CD8-positive, alpha-beta T cell (primary cell): ENCODE measurements at regions of chr17 and their contacts with region 1.

Region 1: DNA sequence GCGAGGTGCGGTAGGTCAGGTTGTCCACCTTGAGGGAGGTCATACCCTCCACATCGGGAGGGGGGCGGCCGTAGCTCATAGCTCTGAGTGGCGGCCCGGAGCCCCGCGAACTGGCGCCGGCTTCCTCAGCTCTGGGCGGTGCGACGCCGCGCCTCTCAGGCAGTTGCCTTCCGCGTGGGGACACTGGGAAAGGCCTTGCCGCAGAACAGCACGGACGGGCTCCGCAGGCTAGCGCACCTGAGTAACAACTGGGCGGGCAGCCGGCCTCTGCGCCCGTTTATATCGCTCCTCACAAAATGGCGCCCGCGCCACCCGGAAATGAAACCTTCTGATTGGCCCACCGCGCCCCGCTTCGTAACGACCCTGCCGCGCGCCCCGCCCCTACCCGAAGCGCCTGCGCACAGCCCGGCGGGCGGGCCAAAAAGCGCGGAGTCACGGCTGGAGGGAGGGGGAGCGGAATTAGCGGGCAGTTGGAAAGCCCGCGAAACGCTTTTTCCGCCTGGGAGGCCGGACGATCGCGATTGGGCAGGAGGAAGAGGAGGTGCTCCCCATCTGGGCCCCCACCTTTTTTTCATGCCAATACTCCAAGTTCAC is at the start of gene SRSF2:
- DNase-seq: peak; percentile 96 to 99 (median 98)
- ATAC-seq: peak; percentile 79
- H3K4me3 ChIP-seq: peak within 1 kb of the TSS; percentile 88 to 100
- H3K4me3 Mint-ChIP-seq: peak within 1 kb of the TSS; percentile 96
- H3K27ac ChIP-seq: peak within 1 kb of the TSS; percentile 93 to 99
- H3K27ac Mint-ChIP-seq: peak within 1 kb of the TSS; percentile 97
- H3K4me1 ChIP-seq: peaks cover 44% of the 10 kb centered on the region
- H3K4me1 Mint-ChIP-seq: peaks cover 59% of the 10 kb centered on the region
- H3K27me3 ChIP-seq: no peaks in the 10 kb centered on the region
- H3K27me3 Mint-ChIP-seq: no peaks in the 10 kb centered on the region
- CTCF ChIP-seq: no peak
- total RNA-seq, gene SRSF2: 621 to 637 TPM

Region 2: DNA sequence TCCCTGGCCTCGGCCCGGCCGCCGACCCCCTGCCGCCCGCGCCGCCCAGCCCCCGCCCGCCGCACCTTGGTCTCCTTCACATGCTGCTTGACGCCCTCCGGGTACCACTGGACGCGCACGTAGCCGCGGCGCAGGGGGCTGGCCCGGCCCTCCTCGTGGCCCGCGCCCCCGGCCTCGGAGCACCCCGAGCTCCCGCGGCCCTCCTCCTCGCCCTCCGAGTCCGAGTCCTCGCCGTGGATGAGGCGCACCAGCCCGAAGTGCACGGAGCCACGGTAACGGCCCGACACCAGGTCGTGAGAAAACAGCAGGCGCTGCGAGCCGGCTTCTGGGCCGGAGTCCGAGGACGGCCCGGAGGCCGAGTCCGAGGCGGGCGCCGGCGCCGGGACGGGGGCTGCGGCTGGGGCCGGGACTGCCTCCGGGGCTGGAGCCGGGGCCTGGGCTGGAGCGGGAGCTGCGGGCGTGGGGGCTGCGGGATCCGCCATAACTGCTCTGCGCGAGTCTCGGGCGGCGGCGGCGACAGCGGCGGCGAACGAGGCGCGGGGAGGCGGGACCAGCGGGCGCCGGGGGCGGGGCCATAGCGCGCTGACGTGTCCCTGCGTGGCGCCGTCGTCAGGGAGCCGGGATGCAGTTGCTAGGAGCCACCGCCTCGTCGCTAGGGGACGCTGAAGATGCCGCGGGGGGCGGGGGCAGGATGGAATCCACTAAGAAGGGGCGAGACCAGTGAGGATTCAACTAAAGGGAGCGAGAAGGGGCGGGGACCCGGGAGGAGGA is 284.3 kb before region 1 on chr17 and contains the start of gene UBE2O:
- CTCF ChIA-PET with region 1: no interaction called
- POLR2A ChIA-PET with region 1: interaction called, 4 read pairs
- intact Hi-C with region 1: loop called in 1 of 2 experiments (anchors 5 kb)
- DNase-seq: peak; percentile 84 to 96 (median 94)
- ATAC-seq: peak; percentile 92
- H3K4me3 ChIP-seq: peak within 1 kb of the TSS; percentile 49 to 78
- H3K4me3 Mint-ChIP-seq: peak within 1 kb of the TSS; percentile 85
- H3K27ac ChIP-seq: peak within 1 kb of the TSS; percentile 50 to 64
- H3K27ac Mint-ChIP-seq: peak within 1 kb of the TSS; percentile 78
- H3K4me1 ChIP-seq: peaks cover 22% of the 10 kb centered on the region
- H3K4me1 Mint-ChIP-seq: peaks cover 39% of the 10 kb centered on the region
- H3K27me3 ChIP-seq: no peaks in the 10 kb centered on the region
- H3K27me3 Mint-ChIP-seq: no peaks in the 10 kb centered on the region
- CTCF ChIP-seq: peak; percentile 39
- total RNA-seq, gene UBE2O: 29.8 to 32.7 TPM

Region 3: DNA sequence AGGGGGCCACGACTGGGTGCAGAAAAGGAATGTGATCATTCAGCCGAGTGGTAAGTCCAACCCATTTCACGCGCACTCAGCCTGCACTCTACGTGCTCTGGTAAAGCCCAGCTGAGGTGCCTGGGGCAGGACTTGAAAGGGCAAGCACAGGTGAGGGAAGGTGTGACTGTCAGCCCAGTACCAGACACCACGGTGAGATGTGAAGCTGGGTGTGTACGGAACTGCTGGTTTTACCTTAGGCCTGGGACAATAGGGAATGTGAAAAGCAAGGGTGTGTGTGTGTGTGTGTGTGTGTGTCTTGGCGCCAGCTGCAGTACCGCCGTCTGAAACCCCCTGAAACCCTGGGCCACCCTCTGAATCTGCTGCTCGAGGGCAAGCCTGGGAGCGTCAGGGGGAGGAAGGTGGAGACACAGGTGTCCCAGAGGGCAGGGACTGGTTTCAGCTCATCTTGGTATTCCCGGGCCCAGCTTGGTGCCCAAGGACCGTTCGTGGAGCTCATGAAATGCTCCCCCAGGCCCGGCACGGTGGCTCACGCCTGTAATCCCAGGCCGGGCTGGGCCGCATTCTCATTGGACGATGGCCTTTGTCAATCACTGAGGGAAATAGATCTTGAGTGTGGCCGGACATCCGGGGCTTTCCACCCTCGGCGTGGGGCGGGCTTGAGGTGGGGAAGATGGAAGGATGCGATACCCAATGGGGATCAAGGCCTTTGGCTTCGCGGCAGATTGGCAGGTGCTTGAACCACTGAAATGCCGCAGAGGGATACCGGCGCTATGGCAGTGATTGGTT is 65.9 kb before region 1 on chr17:
- CTCF ChIA-PET with region 1: no interaction called
- POLR2A ChIA-PET with region 1: interaction called, 5 read pairs
- intact Hi-C with region 1: loop called (anchors 1 to 2 kb)
- DNase-seq: peak; percentile 96 to 100 (median 99)
- ATAC-seq: peak; percentile 97
- H3K4me3 ChIP-seq: peak overlapping the region; percentile 76 to 79
- H3K4me3 Mint-ChIP-seq: peak overlapping the region; percentile 90
- H3K27ac ChIP-seq: peak overlapping the region; percentile 71 to 90
- H3K27ac Mint-ChIP-seq: peak overlapping the region; percentile 96
- H3K4me1 ChIP-seq: peaks cover 39% of the 10 kb centered on the region
- H3K4me1 Mint-ChIP-seq: peaks cover 49% of the 10 kb centered on the region
- H3K27me3 ChIP-seq: no peaks in the 10 kb centered on the region
- H3K27me3 Mint-ChIP-seq: no peaks in the 10 kb centered on the region
- CTCF ChIP-seq: no peak

Region 4: GRCh38 chr17:76753061-76753961 is 16.1 kb after region 1 on chr17:
- CTCF ChIA-PET with region 1: interaction called, 4 read pairs
- POLR2A ChIA-PET with region 1: interaction called, 6 read pairs
- intact Hi-C with region 1: loop called (anchors 1 kb)
- DNase-seq: peak in 6 of 9 experiments; percentile 16 to 87 (median 58)
- ATAC-seq: peak; percentile 82
- H3K4me3 ChIP-seq: peak overlapping the region; percentile 40 to 54
- H3K4me3 Mint-ChIP-seq: peak overlapping the region; percentile 84
- H3K27ac ChIP-seq: peak overlapping the region; percentile 86 to 93
- H3K27ac Mint-ChIP-seq: peak overlapping the region; percentile 98
- H3K4me1 ChIP-seq: peaks cover 20% of the 10 kb centered on the region
- H3K4me1 Mint-ChIP-seq: peaks cover 23% of the 10 kb centered on the region
- H3K27me3 ChIP-seq: no peaks in the 10 kb centered on the region
- H3K27me3 Mint-ChIP-seq: no peaks in the 10 kb centered on the region
- CTCF ChIP-seq: no peak

Region 5: GRCh38 chr17:77140166-77140878 is 403.1 kb after region 1 on chr17:
- CTCF ChIA-PET with region 1: no interaction called
- POLR2A ChIA-PET with region 1: no interaction called
- intact Hi-C with region 1: loop called (anchors 1 to 2 kb)
- DNase-seq: peak; percentile 99 to 100 (median 100)
- ATAC-seq: peak; percentile 90
- H3K4me3 ChIP-seq: peak overlapping the region; percentile 67 to 69
- H3K4me3 Mint-ChIP-seq: peak overlapping the region; percentile 81
- H3K27ac ChIP-seq: peak overlapping the region; percentile 78 to 81
- H3K27ac Mint-ChIP-seq: peak overlapping the region; percentile 95
- H3K4me1 ChIP-seq: peaks cover 27% of the 10 kb centered on the region
- H3K4me1 Mint-ChIP-seq: peaks cover 49% of the 10 kb centered on the region
- H3K27me3 ChIP-seq: no peaks in the 10 kb centered on the region
- H3K27me3 Mint-ChIP-seq: no peaks in the 10 kb centered on the region
- CTCF ChIP-seq: no peak

Region 6: DNA sequence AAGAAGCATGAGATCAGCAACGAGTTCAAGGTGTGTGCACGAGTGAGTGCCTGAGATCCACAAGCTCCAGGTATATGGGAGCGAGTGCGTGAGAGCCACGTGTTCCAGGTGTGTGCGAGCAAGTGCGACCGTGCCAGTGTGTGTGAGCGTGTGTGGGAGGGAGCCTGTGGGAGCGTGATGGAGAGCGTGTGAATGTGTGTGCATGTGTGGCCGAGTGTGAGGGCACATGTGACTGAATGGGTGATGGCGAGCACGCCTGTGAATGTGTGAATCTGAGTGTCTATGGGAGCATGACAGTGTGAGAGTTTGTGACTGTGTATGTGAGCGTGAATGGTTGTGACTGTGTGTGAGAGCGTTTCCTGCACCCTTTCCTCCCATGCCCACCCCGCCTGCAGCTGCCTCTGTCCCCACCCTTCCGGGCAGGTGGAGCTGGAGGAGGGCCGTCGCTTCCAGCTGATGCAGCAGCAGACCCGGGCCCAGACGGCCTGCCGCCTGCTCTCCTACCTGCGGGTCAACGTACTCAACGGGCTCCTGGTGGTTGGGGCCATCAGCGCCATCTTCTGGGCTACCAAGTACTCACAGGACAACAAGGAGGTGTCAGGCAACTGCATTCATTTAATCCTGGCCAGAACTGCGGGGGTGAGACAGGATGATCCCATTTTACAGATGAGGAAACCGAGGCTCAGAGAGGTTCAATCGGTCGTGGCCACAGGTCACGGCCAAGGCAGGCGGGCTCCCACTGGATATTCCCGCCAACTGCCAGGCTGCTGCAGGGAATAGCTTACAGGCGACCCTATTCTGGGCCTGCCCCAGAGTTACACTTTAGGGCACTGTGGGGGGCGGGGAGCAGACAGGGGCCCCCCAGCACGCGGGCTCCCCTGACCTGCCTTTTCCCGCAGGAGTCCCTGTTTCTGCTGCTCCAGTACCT is 1397.1 kb after region 1 on chr17:
- CTCF ChIA-PET with region 1: no interaction called
- POLR2A ChIA-PET with region 1: no interaction called
- intact Hi-C with region 1: loop called in 1 of 2 experiments (anchors 10 kb)
- DNase-seq: peak; percentile 65 to 92 (median 80)
- ATAC-seq: peak; percentile 29
- H3K4me3 ChIP-seq: peak overlapping the region; percentile 95 to 97
- H3K4me3 Mint-ChIP-seq: peak overlapping the region; percentile 79
- H3K27ac ChIP-seq: peak overlapping the region; percentile 37 to 69
- H3K27ac Mint-ChIP-seq: peak overlapping the region; percentile 88
- H3K4me1 ChIP-seq: peaks cover 74% of the 10 kb centered on the region
- H3K4me1 Mint-ChIP-seq: peaks cover 72% of the 10 kb centered on the region
- H3K27me3 ChIP-seq: no peaks in the 10 kb centered on the region
- H3K27me3 Mint-ChIP-seq: no peaks in the 10 kb centered on the region
- CTCF ChIP-seq: peak; percentile 72